Activated T-helper 1 cell treated with anti-CD3 and anti-CD28 coated beads, Interleukin-12 subunit alpha, Interleukin-12 subunit beta, Interleukin-2, Interleukin-4 antibody, amounts not matched to agents 30 ng/mL and 10 ng/mL and 1 ng/mL, durations not matched to agents 14 hours and 24 hours and 36 hours (primary cell): ENCODE measurements at regions of chr15 and their contacts with region 1.

Region 1: GRCh38 chr15:79896637-79897379 is at the start of gene MTHFS:
- DNase-seq: peak; percentile 75
- H3K4me3 Mint-ChIP-seq: peak within 1 kb of the TSS; percentile 97
- H3K27ac Mint-ChIP-seq: peak within 1 kb of the TSS; percentile 96
- H3K4me1 Mint-ChIP-seq: peaks cover 44% of the 10 kb centered on the region
- H3K27me3 Mint-ChIP-seq: no peaks in the 10 kb centered on the region
- total RNA-seq, gene MTHFS: 32.2 and 34.0 TPM in 2 replicates

Region 2: DNA sequence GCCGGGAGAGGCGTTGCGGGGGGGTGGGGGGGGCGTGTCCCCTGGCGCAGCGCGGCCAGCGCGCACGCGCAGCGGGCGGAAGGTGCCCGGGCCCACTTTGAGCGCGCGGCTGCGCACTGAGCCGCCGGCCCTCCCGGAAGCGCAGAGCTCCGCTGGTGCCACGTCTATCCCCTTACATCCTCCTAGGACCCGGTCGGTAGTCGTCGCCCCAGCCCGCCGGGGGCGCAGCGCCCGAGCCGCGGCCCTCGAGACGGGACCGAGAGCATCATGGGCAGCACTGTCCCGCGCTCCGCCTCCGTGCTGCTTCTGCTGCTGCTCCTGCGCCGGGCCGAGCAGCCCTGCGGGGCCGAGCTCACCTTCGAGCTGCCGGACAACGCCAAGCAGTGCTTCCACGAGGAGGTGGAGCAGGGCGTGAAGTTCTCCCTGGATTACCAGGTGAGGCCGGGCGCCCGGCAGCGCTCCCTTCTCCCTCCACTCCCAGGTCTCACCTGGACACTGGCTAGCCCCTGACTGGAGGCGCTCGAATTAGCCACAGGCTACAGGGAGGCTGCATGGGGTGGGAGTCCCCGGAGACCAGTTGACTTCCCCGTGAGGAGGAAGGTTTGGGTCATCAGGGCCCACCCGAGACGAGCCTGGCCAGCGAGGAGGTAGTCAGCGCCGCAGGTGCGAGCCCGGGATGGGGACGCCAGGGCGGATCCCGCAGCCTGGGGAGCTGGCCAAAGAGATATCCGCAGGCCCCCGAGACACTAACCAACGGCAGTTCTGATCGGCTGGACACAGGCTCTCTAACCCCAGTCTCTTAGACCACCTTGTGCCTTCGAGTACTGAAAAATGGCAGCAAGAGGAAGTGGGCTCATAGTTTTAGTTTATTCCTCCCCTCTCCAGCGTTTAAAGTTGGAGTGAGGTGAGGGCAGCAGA is 585.6 kb before region 1 on chr15 and contains the start of gene TMED3:
- intact Hi-C with region 1: loop called (anchors 2 kb)
- DNase-seq: peak; percentile 82
- H3K4me3 Mint-ChIP-seq: peak within 1 kb of the TSS; percentile 95
- H3K27ac Mint-ChIP-seq: peak within 1 kb of the TSS; percentile 68
- H3K4me1 Mint-ChIP-seq: peaks cover 38% of the 10 kb centered on the region
- H3K27me3 Mint-ChIP-seq: peaks cover 27% of the 10 kb centered on the region
- total RNA-seq, gene TMED3: 60.8 and 63.4 TPM in 2 replicates

Region 3: DNA sequence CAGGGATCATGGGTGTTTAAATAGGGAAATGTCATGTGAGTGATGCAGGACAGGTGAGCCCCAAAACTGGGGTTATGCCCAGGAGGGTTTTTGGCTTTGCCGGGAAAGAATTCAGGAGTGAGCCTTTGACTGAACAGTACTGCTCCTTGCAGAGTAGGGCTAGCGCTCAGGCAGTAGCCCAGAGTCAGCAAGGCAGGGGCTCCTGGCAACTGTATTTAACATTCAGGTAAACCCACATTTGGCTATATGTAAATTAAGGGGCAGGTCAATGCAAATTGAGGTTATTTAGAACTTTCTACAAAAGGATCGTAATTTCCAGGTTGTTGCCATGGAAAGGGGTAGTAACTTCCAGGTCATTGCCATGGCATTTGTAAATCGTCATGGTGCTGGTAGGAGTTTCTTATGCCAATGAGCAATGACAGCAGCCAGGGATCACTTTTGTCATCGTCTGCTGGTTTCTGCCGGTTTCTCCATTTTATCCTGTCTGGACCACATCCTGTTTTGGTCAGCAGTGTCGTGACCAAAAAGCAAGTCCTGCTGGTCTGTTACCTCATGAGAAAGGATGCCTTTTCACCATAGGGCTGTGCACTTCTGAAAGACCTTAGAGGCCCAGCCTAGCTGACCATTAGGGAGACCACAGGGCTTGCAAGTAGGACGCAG is 24.3 kb before region 1 on chr15:
- intact Hi-C with region 1: loop called (anchors 1 kb)
- DNase-seq: peak; percentile 39
- H3K4me3 Mint-ChIP-seq: no peak overlapping the region
- H3K27ac Mint-ChIP-seq: peak overlapping the region; percentile 11
- H3K4me1 Mint-ChIP-seq: peaks cover 29% of the 10 kb centered on the region
- H3K27me3 Mint-ChIP-seq: no peaks in the 10 kb centered on the region

Region 4: GRCh38 chr15:79923515-79924395 is 26.9 kb after region 1 on chr15:
- intact Hi-C with region 1: loop called (anchors 1 kb)
- DNase-seq: peak; percentile 99
- H3K4me3 Mint-ChIP-seq: peak overlapping the region; percentile 92
- H3K27ac Mint-ChIP-seq: peak overlapping the region; percentile 95
- H3K4me1 Mint-ChIP-seq: peaks cover 16% of the 10 kb centered on the region
- H3K27me3 Mint-ChIP-seq: no peaks in the 10 kb centered on the region